Psoas muscle (tissue), 8 donors: ENCODE measurements at regions of chr6 and their contacts with region 1.

Region 1: GRCh38 chr6:111721753-111722154 is 116.1 kb upstream of the TRAF3IP2 start:
- DNase-seq: no peak
- ATAC-seq: peak in 2 of 4 donors; percentile 39 to 42
- H3K4me3 ChIP-seq: no peak overlapping the region
- H3K27ac ChIP-seq: no peak overlapping the region
- H3K4me1 ChIP-seq: no peaks in the 10 kb centered on the region
- H3K27me3 ChIP-seq: no peaks in the 10 kb centered on the region
- CTCF ChIP-seq: peak; percentile 37

Region 2: DNA sequence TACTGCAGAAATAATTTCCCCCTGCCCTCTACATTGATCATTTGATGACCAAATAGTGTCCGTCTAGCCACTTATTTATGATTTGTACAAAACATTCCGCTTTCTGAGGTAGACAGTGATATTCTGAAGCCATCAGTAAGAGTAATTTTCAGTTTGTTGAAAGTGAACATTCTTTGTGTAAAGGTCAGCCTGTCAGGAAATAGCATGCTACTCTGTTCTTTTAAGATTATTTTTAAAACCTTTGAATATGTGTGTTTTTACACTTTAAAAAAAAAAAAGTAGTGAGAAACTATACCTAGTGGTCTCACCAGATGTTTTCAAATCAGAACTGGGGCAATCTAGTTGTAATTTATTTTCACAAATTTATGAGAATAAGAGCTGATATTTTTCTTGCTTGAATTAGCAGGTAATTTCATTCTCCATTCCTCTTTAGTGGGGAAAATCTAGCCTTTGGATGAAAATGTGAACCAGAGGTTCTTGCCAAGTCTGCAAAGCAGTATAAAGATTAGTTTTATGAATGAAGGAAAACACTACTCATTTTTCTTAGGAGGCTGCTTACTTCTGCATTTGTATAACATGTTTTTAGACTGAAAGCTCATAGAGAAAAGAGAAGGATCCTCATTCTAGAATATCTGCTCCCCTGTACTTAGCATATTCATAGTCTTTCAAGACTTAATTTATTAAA is 226.7 kb before region 1 on chr6:
- intact Hi-C with region 1: no loop called
- DNase-seq: no peak
- ATAC-seq: no peak
- H3K4me3 ChIP-seq: no peak overlapping the region
- H3K27ac ChIP-seq: no peak overlapping the region
- H3K4me1 ChIP-seq: no peaks in the 10 kb centered on the region
- H3K27me3 ChIP-seq: no peaks in the 10 kb centered on the region
- CTCF ChIP-seq: no peak

Region 3: GRCh38 chr6:111841822-111842221 is 120.1 kb after region 1 on chr6:
- intact Hi-C with region 1: loop called in 1 of 2 experiments (anchors 10 kb)
- DNase-seq: no peak
- ATAC-seq: no peak
- H3K4me3 ChIP-seq: no peak overlapping the region
- H3K27ac ChIP-seq: no peak overlapping the region
- H3K4me1 ChIP-seq: peaks cover 4% of the 10 kb centered on the region
- H3K27me3 ChIP-seq: no peaks in the 10 kb centered on the region
- CTCF ChIP-seq: no peak

Region 4: DNA sequence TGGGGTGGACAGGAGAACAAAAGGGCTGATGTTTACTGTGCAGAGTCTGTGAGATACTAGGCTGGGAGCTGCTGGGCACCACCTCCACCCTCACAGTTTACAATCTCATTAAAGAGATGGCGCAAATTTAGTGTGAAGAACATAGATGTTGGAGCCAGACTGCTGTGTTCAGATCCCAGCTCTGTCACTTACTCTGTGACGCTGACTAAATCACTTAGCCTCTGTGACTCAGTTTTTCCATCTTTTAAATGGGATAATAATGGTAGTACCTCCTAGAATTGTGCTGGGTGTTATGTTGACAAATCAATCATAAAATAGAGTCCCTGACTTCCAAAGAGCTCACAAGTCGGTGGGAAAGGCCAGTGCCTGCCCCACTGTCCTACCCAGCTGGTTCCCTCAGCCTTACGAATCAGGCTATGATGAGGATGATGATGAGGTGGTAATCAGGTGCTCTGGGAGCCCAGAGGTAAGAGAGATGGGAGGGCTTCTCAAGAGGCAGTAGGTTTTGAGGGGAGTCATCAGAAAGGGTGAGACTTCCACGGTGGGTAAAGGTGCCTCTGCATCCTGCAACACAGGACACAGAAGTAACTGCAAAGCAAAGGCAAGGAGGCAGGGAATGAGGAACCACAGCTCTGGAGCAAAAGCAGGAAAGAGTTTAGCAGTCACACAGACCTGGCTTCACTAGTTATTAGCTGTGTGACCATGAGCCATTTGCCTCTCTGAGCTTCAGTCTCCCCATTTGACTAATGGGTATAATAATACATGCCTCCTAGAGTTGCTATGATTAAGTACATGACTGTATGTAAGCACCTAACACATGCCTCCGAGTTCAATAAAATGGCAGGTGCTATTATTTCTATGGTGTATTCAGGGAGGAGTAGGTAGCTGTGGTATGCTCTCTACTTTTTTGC is 142.6 kb after region 1 on chr6:
- intact Hi-C with region 1: loop called in 1 of 2 experiments (anchors 5 kb)
- DNase-seq: no peak
- ATAC-seq: no peak
- H3K4me3 ChIP-seq: no peak overlapping the region
- H3K27ac ChIP-seq: no peak overlapping the region
- H3K4me1 ChIP-seq: no peaks in the 10 kb centered on the region
- H3K27me3 ChIP-seq: peaks cover 0 to 5% (median 3%) of the 10 kb centered on the region in 3 donors
- CTCF ChIP-seq: no peak

Region 5: DNA sequence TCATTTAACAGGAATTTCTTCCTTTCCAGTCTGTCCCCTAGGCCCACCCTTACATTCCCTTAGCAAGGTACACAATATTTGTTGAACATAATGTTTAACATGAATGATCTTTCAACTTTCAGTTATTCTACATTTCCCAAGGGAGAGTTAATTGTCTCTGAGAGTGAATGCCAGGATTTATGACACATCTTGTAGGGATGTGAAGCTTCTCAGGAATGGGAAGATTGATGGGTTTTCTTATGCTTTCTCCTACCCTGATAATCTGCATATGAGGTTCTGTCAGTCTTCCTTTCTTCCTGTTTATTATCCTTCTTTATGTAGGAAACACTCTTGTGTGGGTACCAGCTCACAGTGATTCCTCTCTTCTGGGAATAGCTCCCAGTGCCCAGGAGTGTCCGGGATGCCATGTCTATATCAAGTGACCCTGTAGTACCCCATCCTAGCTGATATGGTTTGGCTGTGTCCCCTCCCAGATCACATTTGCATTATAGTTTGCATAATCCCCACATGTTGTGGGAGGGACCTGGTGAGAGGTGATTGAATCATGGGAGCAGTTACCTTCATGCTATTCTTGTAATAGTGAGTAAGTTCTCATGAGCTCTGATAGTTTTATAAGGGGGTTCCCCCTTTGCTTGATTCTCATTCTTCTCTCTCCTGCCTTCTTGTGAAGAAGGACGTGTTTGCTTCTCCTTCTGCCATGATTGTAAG is 158.6 kb after region 1 on chr6:
- intact Hi-C with region 1: no loop called
- DNase-seq: no peak
- ATAC-seq: no peak
- H3K4me3 ChIP-seq: no peak overlapping the region
- H3K27ac ChIP-seq: no peak overlapping the region
- H3K4me1 ChIP-seq: no peaks in the 10 kb centered on the region
- H3K27me3 ChIP-seq: peaks cover 0 to 13% (median 0%) of the 10 kb centered on the region in 3 donors
- CTCF ChIP-seq: no peak